ENCODE measurements at regions of chr17 and their contacts with region 1.

Region 1: DNA sequence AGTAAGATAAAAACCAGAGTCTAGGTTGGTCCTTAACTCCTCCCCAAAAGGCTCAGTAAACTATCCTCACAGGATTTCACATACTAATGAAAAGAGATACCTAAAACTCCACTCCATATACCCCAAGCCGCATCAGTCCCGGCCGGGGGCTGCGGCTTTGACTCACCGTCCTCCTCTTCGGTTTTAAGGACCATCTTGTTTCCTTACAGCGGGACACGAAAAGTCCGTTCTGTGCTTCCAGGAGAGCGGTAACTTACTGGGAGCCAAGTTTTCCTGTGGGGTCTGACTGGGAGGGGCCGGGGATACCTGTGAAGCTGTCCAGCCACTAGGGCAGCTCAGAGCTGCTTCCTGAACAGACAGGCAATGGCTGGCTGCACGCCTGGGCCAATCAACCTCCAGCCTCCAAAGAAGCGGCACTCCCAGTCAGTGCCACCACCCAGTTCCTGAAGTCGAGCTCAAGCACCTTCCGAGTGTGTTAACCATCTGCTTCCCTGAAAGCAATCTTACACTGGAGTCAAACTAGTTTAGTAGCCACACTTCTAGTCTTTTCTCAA is 45.5 kb downstream of the CYTH1 start:
- DNase-seq: peak; percentile 76
- ATAC-seq: peak; percentile 56
- H3K4me3 ChIP-seq: peak overlapping the region; percentile 79 to 100 (median 85)
- H3K4me3 Mint-ChIP-seq: peak overlapping the region; percentile 91
- H3K27ac ChIP-seq: peak overlapping the region; percentile 80 to 95
- H3K27ac Mint-ChIP-seq: peak overlapping the region; percentile 89
- H3K4me1 ChIP-seq: peaks cover 78 to 84% of the 10 kb centered on the region in 2 donors
- H3K4me1 Mint-ChIP-seq: peaks cover 85% of the 10 kb centered on the region
- H3K27me3 ChIP-seq: no peaks in the 10 kb centered on the region
- H3K27me3 Mint-ChIP-seq: no peaks in the 10 kb centered on the region
- CTCF ChIP-seq: no peak

Region 2: GRCh38 chr17:78442648-78443128 is 293.9 kb before region 1 on chr17:
- CTCF ChIA-PET with region 1: no interaction called
- POLR2A ChIA-PET with region 1: no interaction called
- intact Hi-C with region 1: no loop called
- DNase-seq: no peak
- ATAC-seq: no peak
- H3K4me3 ChIP-seq: no peak overlapping the region
- H3K4me3 Mint-ChIP-seq: no peak overlapping the region
- H3K27ac ChIP-seq: no peak overlapping the region
- H3K27ac Mint-ChIP-seq: no peak overlapping the region
- H3K4me1 ChIP-seq: no peaks in the 10 kb centered on the region
- H3K4me1 Mint-ChIP-seq: no peaks in the 10 kb centered on the region
- H3K27me3 ChIP-seq: peaks cover 0 to 4% (median 0%) of the 10 kb centered on the region in 4 experiments
- H3K27me3 Mint-ChIP-seq: peaks cover 8% of the 10 kb centered on the region
- CTCF ChIP-seq: no peak

Region 3: DNA sequence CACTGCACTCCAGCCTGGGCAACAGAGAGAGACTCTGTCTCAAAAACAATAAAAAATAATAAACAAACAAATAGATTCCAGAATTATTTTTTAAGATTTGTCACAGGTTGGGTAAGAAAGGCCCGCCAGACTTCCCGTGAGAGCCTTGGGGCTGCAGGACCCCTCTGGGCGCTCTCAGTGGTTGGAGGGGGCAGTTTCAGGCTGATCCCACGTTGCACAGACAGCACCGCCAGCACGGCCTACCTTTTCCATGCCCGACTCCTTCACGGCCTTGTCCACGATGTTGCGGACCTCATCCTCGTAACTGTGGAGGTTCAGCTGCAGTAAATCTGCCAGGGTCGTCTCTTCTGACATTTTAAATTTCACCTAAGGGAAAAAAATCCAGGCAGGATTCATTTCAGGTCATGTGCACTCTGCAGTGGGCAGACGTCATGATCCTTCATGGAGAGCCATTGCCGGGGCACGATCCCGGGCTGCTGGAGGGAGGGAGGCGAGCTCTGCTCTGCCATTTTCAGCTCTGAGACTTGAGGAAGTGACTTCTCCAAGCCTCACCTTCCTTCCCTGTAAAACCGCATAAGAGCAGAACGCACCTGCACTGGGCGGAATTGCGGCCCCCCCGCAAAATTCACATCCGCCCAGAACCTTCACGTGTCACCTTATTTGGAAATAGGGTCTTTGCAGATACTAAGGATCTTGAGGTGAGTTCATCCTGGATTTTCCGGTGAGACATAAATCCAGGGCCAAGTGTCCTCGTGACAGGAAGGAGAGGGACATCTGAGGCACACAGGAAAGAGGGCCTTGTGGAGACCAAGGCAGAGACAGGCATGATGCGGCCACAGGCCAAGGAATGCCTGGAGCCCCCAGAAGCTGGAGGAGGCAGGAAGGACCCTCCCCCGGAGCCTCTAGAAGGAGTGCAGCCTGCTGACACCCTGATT is 226.2 kb before region 1 on chr17:
- CTCF ChIA-PET with region 1: no interaction called
- POLR2A ChIA-PET with region 1: no interaction called
- intact Hi-C with region 1: no loop called
- DNase-seq: no peak
- ATAC-seq: no peak
- H3K4me3 ChIP-seq: no peak overlapping the region
- H3K4me3 Mint-ChIP-seq: no peak overlapping the region
- H3K27ac ChIP-seq: no peak overlapping the region
- H3K27ac Mint-ChIP-seq: no peak overlapping the region
- H3K4me1 ChIP-seq: no peaks in the 10 kb centered on the region
- H3K4me1 Mint-ChIP-seq: no peaks in the 10 kb centered on the region
- H3K27me3 ChIP-seq: peaks cover 0 to 6% (median 0%) of the 10 kb centered on the region in 4 experiments
- H3K27me3 Mint-ChIP-seq: peaks cover 9% of the 10 kb centered on the region
- CTCF ChIP-seq: no peak

Region 4: GRCh38 chr17:78689029-78689428 is 47.6 kb before region 1 on chr17:
- CTCF ChIA-PET with region 1: interaction called, 3 read pairs
- POLR2A ChIA-PET with region 1: interaction called, 13 read pairs
- intact Hi-C with region 1: no loop called
- DNase-seq: no peak
- ATAC-seq: no peak
- H3K4me3 ChIP-seq: no peak overlapping the region
- H3K4me3 Mint-ChIP-seq: no peak overlapping the region
- H3K27ac ChIP-seq: no peak overlapping the region
- H3K27ac Mint-ChIP-seq: no peak overlapping the region
- H3K4me1 ChIP-seq: no peaks in the 10 kb centered on the region
- H3K4me1 Mint-ChIP-seq: peaks cover 9% of the 10 kb centered on the region
- H3K27me3 ChIP-seq: no peaks in the 10 kb centered on the region
- H3K27me3 Mint-ChIP-seq: no peaks in the 10 kb centered on the region
- CTCF ChIP-seq: peak; percentile 39

Region 5: GRCh38 chr17:78716814-78717393 is 19.7 kb before region 1 on chr17:
- CTCF ChIA-PET with region 1: interaction called, 50 read pairs
- POLR2A ChIA-PET with region 1: interaction called, 13 read pairs
- intact Hi-C with region 1: loop called (anchors 1 kb)
- DNase-seq: peak; percentile 54
- ATAC-seq: peak; percentile 28
- H3K4me3 ChIP-seq: peak overlapping the region in 3 of 5 experiments; percentile 13 to 37 (median 17)
- H3K4me3 Mint-ChIP-seq: peak overlapping the region; percentile 78
- H3K27ac ChIP-seq: peak overlapping the region in 1 of 2 donors; percentile 86
- H3K27ac Mint-ChIP-seq: peak overlapping the region; percentile 78
- H3K4me1 ChIP-seq: peaks cover 90 to 97% of the 10 kb centered on the region in 2 donors
- H3K4me1 Mint-ChIP-seq: peaks cover 90% of the 10 kb centered on the region
- H3K27me3 ChIP-seq: no peaks in the 10 kb centered on the region
- H3K27me3 Mint-ChIP-seq: no peaks in the 10 kb centered on the region
- CTCF ChIP-seq: no peak

Region 6: DNA sequence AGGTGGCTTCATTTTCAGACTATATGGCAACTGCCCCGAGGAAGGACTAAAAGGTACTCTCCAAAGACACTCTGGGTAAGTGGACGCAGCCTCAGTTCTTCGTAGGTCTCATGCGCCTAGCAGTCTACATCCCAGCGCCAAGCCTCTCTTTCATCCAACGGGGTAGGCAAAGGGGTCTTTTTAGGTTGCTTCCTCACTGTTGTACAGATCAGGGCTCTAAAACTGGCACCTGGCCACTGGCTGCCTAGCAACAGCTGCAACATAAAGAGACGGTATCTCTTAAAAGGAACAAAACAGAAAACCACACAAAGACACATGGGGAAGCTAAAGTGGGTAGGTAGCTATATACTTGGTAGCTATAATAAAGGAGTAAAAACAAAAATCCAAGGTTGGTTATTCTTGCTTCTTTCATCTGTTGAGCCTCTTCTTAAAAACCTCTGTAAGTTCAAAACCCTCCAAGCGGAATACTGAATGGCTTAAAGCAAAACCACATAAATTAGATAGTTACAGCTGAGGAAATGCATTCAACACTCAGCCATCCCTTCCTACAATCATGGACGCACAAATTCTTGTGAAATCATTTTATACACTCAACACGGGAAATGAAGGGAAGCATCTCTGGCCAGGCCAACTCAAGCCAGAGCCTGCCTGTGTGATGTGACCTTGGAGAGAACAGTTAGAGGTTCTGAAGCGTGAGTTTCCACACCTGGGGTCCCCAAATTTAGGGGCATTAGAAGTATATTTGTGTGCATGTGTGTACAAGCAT is 22.8 kb after region 1 on chr17:
- CTCF ChIA-PET with region 1: interaction called, 3 read pairs
- POLR2A ChIA-PET with region 1: interaction called, 4 read pairs
- intact Hi-C with region 1: loop called (anchors 1 kb)
- DNase-seq: peak; percentile 90
- ATAC-seq: peak; percentile 74
- H3K4me3 ChIP-seq: peak overlapping the region; percentile 13 to 47 (median 45)
- H3K4me3 Mint-ChIP-seq: peak overlapping the region; percentile 80
- H3K27ac ChIP-seq: peak overlapping the region; percentile 96 to 98
- H3K27ac Mint-ChIP-seq: peak overlapping the region; percentile 95
- H3K4me1 ChIP-seq: peaks cover 62 to 81% of the 10 kb centered on the region in 2 donors
- H3K4me1 Mint-ChIP-seq: peaks cover 73% of the 10 kb centered on the region
- H3K27me3 ChIP-seq: no peaks in the 10 kb centered on the region
- H3K27me3 Mint-ChIP-seq: no peaks in the 10 kb centered on the region
- CTCF ChIP-seq: no peak

Region 7: GRCh38 chr17:78781948-78782916 is 45.6 kb after region 1 on chr17 and contains the start of gene CYTH1:
- CTCF ChIA-PET with region 1: interaction called, 13 read pairs
- POLR2A ChIA-PET with region 1: interaction called, 10 read pairs
- intact Hi-C with region 1: loop called (anchors 1 kb)
- DNase-seq: peak; percentile 96
- ATAC-seq: peak; percentile 83
- H3K4me3 ChIP-seq: peak within 1 kb of the TSS; percentile 78 to 95 (median 89)
- H3K4me3 Mint-ChIP-seq: peak within 1 kb of the TSS; percentile 88
- H3K27ac ChIP-seq: peak within 1 kb of the TSS; percentile 86 to 88
- H3K27ac Mint-ChIP-seq: peak within 1 kb of the TSS; percentile 96
- H3K4me1 ChIP-seq: peaks cover 33 to 44% of the 10 kb centered on the region in 2 donors
- H3K4me1 Mint-ChIP-seq: peaks cover 36% of the 10 kb centered on the region
- H3K27me3 ChIP-seq: no peaks in the 10 kb centered on the region
- H3K27me3 Mint-ChIP-seq: no peaks in the 10 kb centered on the region
- CTCF ChIP-seq: no peak
- total RNA-seq, gene CYTH1: 353 and 368 TPM in 2 replicates

Measured in B cell (primary cell).